CD4-positive, alpha-beta T cell (primary cell): ENCODE measurements at regions of chr9 and their contacts with region 1.

Region 1: GRCh38 chr9:17757816-17758215 is 178.9 kb downstream of the SH3GL2 start:
- DNase-seq: no peak
- ATAC-seq: no peak
- H3K4me3 ChIP-seq: no peak overlapping the region
- H3K4me3 Mint-ChIP-seq: no peak overlapping the region
- H3K27ac ChIP-seq: no peak overlapping the region
- H3K27ac Mint-ChIP-seq: no peak overlapping the region
- H3K4me1 ChIP-seq: no peaks in the 10 kb centered on the region
- H3K4me1 Mint-ChIP-seq: no peaks in the 10 kb centered on the region
- H3K27me3 ChIP-seq: no peaks in the 10 kb centered on the region
- H3K27me3 Mint-ChIP-seq: no peaks in the 10 kb centered on the region
- CTCF ChIP-seq: no peak

Region 2: DNA sequence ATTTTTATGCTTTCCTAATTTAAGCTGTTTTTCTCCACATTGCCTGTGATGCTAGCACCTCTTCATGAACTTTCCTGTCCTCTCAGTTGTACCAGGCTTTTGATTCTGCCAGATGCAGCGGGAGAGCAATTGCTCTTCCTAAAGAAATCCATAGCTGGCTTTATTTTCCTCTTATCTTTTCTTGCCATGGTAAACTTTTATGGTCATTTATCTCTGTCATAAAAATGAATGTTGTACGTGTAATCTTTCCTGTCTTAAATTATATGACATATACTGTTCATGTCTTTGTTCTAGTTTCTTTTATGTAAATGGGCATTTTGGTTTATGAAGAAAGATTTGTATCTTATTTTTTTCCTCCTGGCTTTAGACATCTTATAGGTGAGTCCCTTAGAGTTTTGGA is 51.5 kb before region 1 on chr9:
- CTCF ChIA-PET with region 1: no interaction called
- POLR2A ChIA-PET with region 1: no interaction called
- intact Hi-C with region 1: loop called in 1 of 2 experiments (anchors 5 kb)
- DNase-seq: no peak
- ATAC-seq: no peak
- H3K4me3 ChIP-seq: no peak overlapping the region
- H3K4me3 Mint-ChIP-seq: no peak overlapping the region
- H3K27ac ChIP-seq: no peak overlapping the region
- H3K27ac Mint-ChIP-seq: no peak overlapping the region
- H3K4me1 ChIP-seq: no peaks in the 10 kb centered on the region
- H3K4me1 Mint-ChIP-seq: no peaks in the 10 kb centered on the region
- H3K27me3 ChIP-seq: no peaks in the 10 kb centered on the region
- H3K27me3 Mint-ChIP-seq: no peaks in the 10 kb centered on the region
- CTCF ChIP-seq: no peak